ENCODE measurements at regions of chr6 and their contacts with region 1.

Region 1: GRCh38 chr6:42104095-42104806 is 38.2 kb downstream of the C6orf132 start:
- DNase-seq: peak; percentile 15
- ATAC-seq: peak; percentile 90
- H3K4me3 ChIP-seq: peak overlapping the region; percentile 68; the same call in 1 of the 2 replicates
- H3K27ac ChIP-seq: no peak overlapping the region
- H3K4me1 ChIP-seq: no peaks in the 10 kb centered on the region
- H3K27me3 ChIP-seq: peaks cover 0 to 3% of the 10 kb centered on the region in 2 experiments; a peak in 1 of 4 replicates
- CTCF ChIP-seq: peak; percentile 64 to 86 (median 82)
- EP300 ChIP-seq: no peak
- POLR2A ChIP-seq: 0 out of 2 replicates have a peak, but pooled peaks have one; percentile 20
- RAD21 ChIP-seq: peak; percentile 38; the same call in 1 of the 2 replicates

Region 2: GRCh38 chr6:41591859-41592502 is 512.3 kb before region 1 on chr6:
- CTCF ChIA-PET with region 1: no interaction called
- POLR2A ChIA-PET with region 1: no interaction called
- RAD21 ChIA-PET with region 1: no interaction called
- SMC1A ChIA-PET with region 1: no interaction called
- in situ Hi-C with region 1: no loop called
- intact Hi-C with region 1: no loop called
- DNase-seq: peak; percentile 9
- ATAC-seq: peak; percentile 92
- H3K4me3 ChIP-seq: no peak overlapping the region
- H3K27ac ChIP-seq: no peak overlapping the region
- H3K4me1 ChIP-seq: no peaks in the 10 kb centered on the region
- H3K27me3 ChIP-seq: no peaks in the 10 kb centered on the region
- CTCF ChIP-seq: peak; percentile 86 to 96 (median 94); a peak in 5 of 6 replicates
- EP300 ChIP-seq: no peak
- POLR2A ChIP-seq: 0 out of 2 replicates have a peak, but pooled peaks have one; percentile 11
- RAD21 ChIP-seq: peak; percentile 96

Region 3: DNA sequence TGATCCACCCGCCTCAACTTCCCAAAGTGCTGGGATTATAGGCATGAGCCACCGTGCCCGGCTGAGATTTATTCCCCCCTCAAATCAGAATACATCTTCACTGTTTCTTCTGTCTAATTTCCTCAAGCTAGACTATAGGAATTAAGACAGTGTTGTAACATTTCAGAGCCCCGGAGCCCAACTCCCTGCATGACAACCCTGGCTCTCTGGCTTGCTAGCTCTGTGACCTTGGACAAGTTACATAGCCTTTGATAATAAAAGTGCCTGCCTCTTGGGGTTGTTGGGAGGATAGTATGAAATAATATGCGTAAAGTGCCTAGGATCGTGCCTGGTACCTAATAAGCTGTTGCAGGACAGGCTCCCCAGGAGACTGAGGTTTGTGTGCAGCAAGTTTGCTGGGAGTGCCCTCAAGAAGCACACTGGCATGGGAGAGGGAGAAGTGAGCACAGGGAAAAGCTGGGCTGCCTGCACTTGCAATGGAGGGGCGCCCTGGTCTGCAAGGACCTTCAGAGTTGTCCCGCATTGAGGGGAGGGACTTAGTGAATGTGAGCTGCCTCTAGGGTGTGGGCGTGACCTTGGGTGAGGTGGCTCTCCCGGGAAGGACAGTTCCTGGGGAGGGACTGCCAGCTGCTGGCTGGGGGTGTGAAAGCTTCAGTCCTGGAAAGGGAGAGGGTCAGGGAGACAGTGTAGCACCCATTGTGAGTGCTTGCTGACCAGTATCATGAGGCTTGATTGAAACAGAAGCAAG is 10.5 kb before region 1 on chr6:
- CTCF ChIA-PET with region 1: interaction called, 21 read pairs
- POLR2A ChIA-PET with region 1: no interaction called
- RAD21 ChIA-PET with region 1: no interaction called
- SMC1A ChIA-PET with region 1: interaction called, 5 read pairs
- in situ Hi-C with region 1: no loop called
- intact Hi-C with region 1: no loop called
- DNase-seq: no peak
- ATAC-seq: no peak
- H3K4me3 ChIP-seq: no peak overlapping the region
- H3K27ac ChIP-seq: no peak overlapping the region
- H3K4me1 ChIP-seq: no peaks in the 10 kb centered on the region
- H3K27me3 ChIP-seq: no peaks in the 10 kb centered on the region; a peak in 1 of 4 replicates
- CTCF ChIP-seq: no peak
- EP300 ChIP-seq: no peak
- POLR2A ChIP-seq: no peak
- RAD21 ChIP-seq: no peak

Measured in GM12878 (cell line).